CD4-positive, alpha-beta T cell (primary cell): ENCODE measurements at regions of chr15 and their contacts with region 1.

Region 1: GRCh38 chr15:40593588-40594428 is at the start of gene KNL1:
- DNase-seq: peak; percentile 74 to 95 (median 83)
- ATAC-seq: peak; percentile 80
- H3K4me3 ChIP-seq: peak within 1 kb of the TSS; percentile 78
- H3K4me3 Mint-ChIP-seq: peak within 1 kb of the TSS; percentile 99
- H3K27ac ChIP-seq: peak within 1 kb of the TSS; percentile 89 to 91
- H3K27ac Mint-ChIP-seq: peak within 1 kb of the TSS; percentile 91
- H3K4me1 ChIP-seq: peaks cover 20% of the 10 kb centered on the region
- H3K4me1 Mint-ChIP-seq: peaks cover 33% of the 10 kb centered on the region
- H3K27me3 ChIP-seq: peaks cover 0 to 5% of the 10 kb centered on the region in 2 experiments
- H3K27me3 Mint-ChIP-seq: peaks cover 18% of the 10 kb centered on the region
- CTCF ChIP-seq: no peak
- total RNA-seq, gene KNL1: 0.59 to 0.69 TPM

Region 2: GRCh38 chr15:40564591-40565332 is 29.0 kb before region 1 on chr15 and contains the start of gene CCDC32:
- CTCF ChIA-PET with region 1: interaction called, 11 read pairs
- POLR2A ChIA-PET with region 1: interaction called, 21 read pairs
- intact Hi-C with region 1: loop called (anchors 1 to 2 kb)
- DNase-seq: peak; percentile 84 to 99 (median 92)
- ATAC-seq: peak; percentile 93
- H3K4me3 ChIP-seq: peak within 1 kb of the TSS; percentile 76
- H3K4me3 Mint-ChIP-seq: peak within 1 kb of the TSS; percentile 97
- H3K27ac ChIP-seq: peak within 1 kb of the TSS; percentile 85 to 89
- H3K27ac Mint-ChIP-seq: peak within 1 kb of the TSS; percentile 88
- H3K4me1 ChIP-seq: peaks cover 34% of the 10 kb centered on the region
- H3K4me1 Mint-ChIP-seq: peaks cover 43% of the 10 kb centered on the region
- H3K27me3 ChIP-seq: no peaks in the 10 kb centered on the region
- H3K27me3 Mint-ChIP-seq: no peaks in the 10 kb centered on the region
- CTCF ChIP-seq: no peak
- total RNA-seq, gene CCDC32: 20.9 to 21.3 TPM

Region 3: DNA sequence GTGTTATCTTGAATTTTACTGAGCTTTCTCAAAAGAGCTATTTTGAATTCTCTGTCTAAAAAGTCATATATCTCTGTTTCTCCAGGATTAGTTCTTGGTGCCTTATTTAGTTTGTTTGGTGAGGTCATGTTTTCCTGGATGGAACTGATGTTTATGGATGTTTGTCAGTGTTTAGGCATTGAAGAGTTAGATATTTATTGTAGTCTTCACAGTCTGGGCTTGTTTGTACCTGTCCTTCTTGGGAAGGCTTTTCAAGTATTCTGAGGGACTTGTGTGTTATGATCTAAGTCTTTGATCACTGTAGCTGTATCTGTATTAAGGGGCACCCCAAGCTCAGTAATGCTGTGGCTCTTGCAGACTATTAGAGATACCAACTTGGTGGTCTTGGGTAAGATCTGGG is 90.6 kb after region 1 on chr15:
- CTCF ChIA-PET with region 1: no interaction called
- POLR2A ChIA-PET with region 1: no interaction called
- intact Hi-C with region 1: loop called in 1 of 2 experiments (anchors 5 kb)
- DNase-seq: no peak
- ATAC-seq: no peak
- H3K4me3 ChIP-seq: no peak overlapping the region
- H3K4me3 Mint-ChIP-seq: no peak overlapping the region
- H3K27ac ChIP-seq: no peak overlapping the region
- H3K27ac Mint-ChIP-seq: no peak overlapping the region
- H3K4me1 ChIP-seq: peaks cover under 1% of the 10 kb centered on the region
- H3K4me1 Mint-ChIP-seq: no peaks in the 10 kb centered on the region
- H3K27me3 ChIP-seq: no peaks in the 10 kb centered on the region
- H3K27me3 Mint-ChIP-seq: no peaks in the 10 kb centered on the region
- CTCF ChIP-seq: no peak

Region 4: GRCh38 chr15:40763801-40764732 is 170.3 kb after region 1 on chr15 and contains the start of gene GCHFR:
- CTCF ChIA-PET with region 1: no interaction called
- POLR2A ChIA-PET with region 1: no interaction called
- intact Hi-C with region 1: loop called (anchors 5 kb)
- DNase-seq: peak; percentile 35 to 87 (median 63)
- ATAC-seq: peak; percentile 48
- H3K4me3 ChIP-seq: peak within 1 kb of the TSS; percentile 98
- H3K4me3 Mint-ChIP-seq: peak within 1 kb of the TSS; percentile 89
- H3K27ac ChIP-seq: peak within 1 kb of the TSS; percentile 60 to 71
- H3K27ac Mint-ChIP-seq: peak within 1 kb of the TSS; percentile 90
- H3K4me1 ChIP-seq: peaks cover 40% of the 10 kb centered on the region
- H3K4me1 Mint-ChIP-seq: peaks cover 30% of the 10 kb centered on the region
- H3K27me3 ChIP-seq: no peaks in the 10 kb centered on the region
- H3K27me3 Mint-ChIP-seq: no peaks in the 10 kb centered on the region
- CTCF ChIP-seq: peak; percentile 45
- total RNA-seq, gene GCHFR: 13.5 to 14.8 TPM

Region 5: DNA sequence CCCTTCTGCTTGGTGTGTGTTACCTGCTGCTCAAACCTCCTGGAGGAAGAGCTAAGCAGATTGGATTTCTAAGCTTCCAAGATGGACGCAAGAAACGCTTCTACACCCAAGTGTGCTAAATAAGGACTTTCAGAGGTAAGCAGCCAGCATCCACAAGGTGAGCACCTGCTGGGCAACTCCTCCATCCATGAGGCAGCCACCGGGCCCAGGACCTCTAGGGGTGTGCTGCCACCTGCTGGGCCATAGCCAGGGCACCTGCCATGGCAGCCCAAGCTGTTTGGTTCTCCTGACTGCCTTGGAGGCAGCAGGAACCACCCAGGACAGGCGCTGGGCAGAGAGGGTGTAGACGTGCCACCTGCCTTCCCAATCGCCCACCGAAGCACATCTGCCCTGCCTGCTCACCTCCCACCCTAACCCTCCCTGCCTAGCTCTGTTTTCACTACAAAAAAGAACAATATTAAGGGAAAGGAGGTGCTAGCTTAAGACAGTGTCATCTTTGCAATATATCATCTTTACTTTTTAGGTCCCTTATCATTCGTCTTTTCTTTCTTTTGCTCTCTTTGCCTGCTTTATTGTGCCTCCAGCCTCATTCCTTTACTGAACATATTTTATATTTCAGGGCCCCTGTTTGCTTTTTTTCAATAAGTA is 188.9 kb after region 1 on chr15:
- CTCF ChIA-PET with region 1: interaction called, 13 read pairs
- POLR2A ChIA-PET with region 1: interaction called, 8 read pairs
- intact Hi-C with region 1: loop called (anchors 1 to 2 kb)
- DNase-seq: peak; percentile 70 to 88 (median 78)
- ATAC-seq: peak; percentile 94
- H3K4me3 ChIP-seq: no peak overlapping the region
- H3K4me3 Mint-ChIP-seq: no peak overlapping the region
- H3K27ac ChIP-seq: no peak overlapping the region
- H3K27ac Mint-ChIP-seq: peak overlapping the region; percentile 1
- H3K4me1 ChIP-seq: peaks cover 9% of the 10 kb centered on the region
- H3K4me1 Mint-ChIP-seq: peaks cover 32% of the 10 kb centered on the region
- H3K27me3 ChIP-seq: no peaks in the 10 kb centered on the region
- H3K27me3 Mint-ChIP-seq: no peaks in the 10 kb centered on the region
- CTCF ChIP-seq: peak; percentile 82

Region 6: GRCh38 chr15:41116116-41116871 is 522.5 kb after region 1 on chr15 and contains the start of gene INO80:
- CTCF ChIA-PET with region 1: interaction called, 3 read pairs
- POLR2A ChIA-PET with region 1: no interaction called
- intact Hi-C with region 1: loop called in 1 of 2 experiments (anchors 2 kb)
- DNase-seq: peak; percentile 90 to 98 (median 95)
- ATAC-seq: peak; percentile 79
- H3K4me3 ChIP-seq: peak within 1 kb of the TSS; percentile 99
- H3K4me3 Mint-ChIP-seq: peak within 1 kb of the TSS; percentile 93
- H3K27ac ChIP-seq: peak within 1 kb of the TSS; percentile 79 to 91
- H3K27ac Mint-ChIP-seq: peak within 1 kb of the TSS; percentile 98
- H3K4me1 ChIP-seq: peaks cover 20% of the 10 kb centered on the region
- H3K4me1 Mint-ChIP-seq: peaks cover 25% of the 10 kb centered on the region
- H3K27me3 ChIP-seq: no peaks in the 10 kb centered on the region
- H3K27me3 Mint-ChIP-seq: no peaks in the 10 kb centered on the region
- CTCF ChIP-seq: no peak
- total RNA-seq, gene INO80: 20.3 to 22.9 TPM